Vagina (tissue), 2 donors: ENCODE measurements at regions of chr15 and their contacts with region 1.

Region 1: GRCh38 chr15:31560643-31561042 is 234.0 kb downstream of the KLF13 start:
- DNase-seq: peak in 1 of 2 donors; percentile 52
- H3K4me3 ChIP-seq: no peak overlapping the region
- H3K27ac ChIP-seq: no peak overlapping the region
- H3K4me1 ChIP-seq: no peaks in the 10 kb centered on the region
- H3K27me3 ChIP-seq: no peaks in the 10 kb centered on the region
- CTCF ChIP-seq: no peak
- POLR2A ChIP-seq: no peak

Region 2: GRCh38 chr15:31545257-31545656 is 15.4 kb before region 1 on chr15:
- intact Hi-C with region 1: loop called (anchors 1 kb)
- DNase-seq: no peak
- H3K4me3 ChIP-seq: no peak overlapping the region
- H3K27ac ChIP-seq: no peak overlapping the region
- H3K4me1 ChIP-seq: no peaks in the 10 kb centered on the region
- H3K27me3 ChIP-seq: no peaks in the 10 kb centered on the region
- CTCF ChIP-seq: no peak
- POLR2A ChIP-seq: no peak

Region 3: GRCh38 chr15:31887246-31887645 is 326.6 kb after region 1 on chr15:
- intact Hi-C with region 1: no loop called
- DNase-seq: no peak
- H3K4me3 ChIP-seq: no peak overlapping the region
- H3K27ac ChIP-seq: no peak overlapping the region
- H3K4me1 ChIP-seq: no peaks in the 10 kb centered on the region
- H3K27me3 ChIP-seq: no peaks in the 10 kb centered on the region
- CTCF ChIP-seq: no peak
- POLR2A ChIP-seq: no peak